Activated CD8-positive, alpha-beta T cell treated with anti-CD3 and anti-CD28 coated beads, Interleukin-2, amount 10 ng/mL, durations not matched to agents 7 days and 5 days (primary cell): ENCODE measurements at regions of chr2 and their contacts with region 1.

Region 1: DNA sequence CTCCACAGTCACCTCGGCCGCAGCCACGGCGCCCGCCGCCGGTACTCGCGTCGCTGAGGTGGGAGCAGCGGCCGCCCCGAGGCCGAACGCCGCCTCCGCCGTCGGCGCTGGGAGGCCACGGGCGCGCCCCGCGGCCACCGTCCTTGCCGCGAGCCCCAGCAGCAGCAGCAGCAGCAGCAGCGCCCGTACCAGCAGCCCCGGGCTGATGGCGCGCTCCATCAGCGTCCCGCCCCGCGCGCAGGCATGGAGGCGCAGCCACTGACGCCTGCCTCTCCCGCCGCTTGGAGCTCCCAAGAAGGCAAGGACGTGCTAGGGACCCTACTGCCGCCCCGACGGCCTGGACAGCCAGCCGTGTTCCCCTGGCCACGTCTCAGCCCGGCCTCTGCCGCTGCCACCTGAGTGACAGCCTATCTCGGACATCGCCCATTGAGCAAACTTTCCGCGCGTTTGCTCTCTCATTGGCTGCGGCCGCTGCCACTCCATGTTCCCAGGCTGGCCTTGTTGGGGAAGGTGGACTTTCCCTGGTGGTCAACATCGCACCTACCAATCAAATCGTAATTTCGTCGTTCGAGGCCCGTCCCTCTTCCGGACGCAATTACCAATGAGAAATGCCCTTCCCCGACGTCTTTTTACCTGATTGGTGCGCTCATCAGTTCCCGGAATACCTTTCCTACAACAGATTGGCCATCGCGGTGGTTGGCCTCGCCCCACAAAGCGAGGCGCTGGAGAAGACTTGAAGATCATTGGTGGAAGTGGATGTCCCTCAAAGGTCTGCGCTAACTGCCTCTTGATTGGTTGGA is at the start of gene EIF2AK3:
- DNase-seq: peak; percentile 98
- ATAC-seq: peak; percentile 90
- H3K4me3 Mint-ChIP-seq: peak within 1 kb of the TSS; percentile 94
- H3K27ac Mint-ChIP-seq: peak within 1 kb of the TSS; percentile 92
- H3K4me1 Mint-ChIP-seq: peaks cover 10% of the 10 kb centered on the region
- H3K27me3 Mint-ChIP-seq: no peaks in the 10 kb centered on the region
- total RNA-seq, gene EIF2AK3: 18.4 to 19.7 TPM

Region 2: DNA sequence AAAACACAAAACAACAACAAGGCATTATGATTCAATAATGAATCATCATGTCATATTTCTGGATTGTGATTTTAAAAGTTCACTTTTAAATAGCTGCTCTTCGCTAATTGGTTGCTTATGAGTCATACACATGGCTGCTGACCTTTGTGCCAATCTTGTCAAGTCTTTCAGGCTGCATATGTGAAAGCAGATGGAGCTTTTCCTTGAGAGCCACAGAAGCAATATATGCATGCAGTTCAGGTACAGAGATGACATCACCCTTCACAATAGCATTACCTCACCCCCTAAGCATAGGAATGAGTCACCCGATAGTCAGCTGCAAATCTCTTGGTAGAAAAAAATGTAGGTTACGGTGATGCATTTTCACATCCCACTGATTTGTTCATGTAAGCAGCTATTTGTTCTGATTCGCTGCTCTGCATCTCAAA is 27.2 kb before region 1 on chr2:
- CTCF ChIA-PET with region 1: no interaction called
- POLR2A ChIA-PET with region 1: interaction called, 19 read pairs
- DNase-seq: peak; percentile 60
- ATAC-seq: peak; percentile 100
- H3K4me3 Mint-ChIP-seq: no peak overlapping the region
- H3K27ac Mint-ChIP-seq: no peak overlapping the region
- H3K4me1 Mint-ChIP-seq: peaks cover 18% of the 10 kb centered on the region
- H3K27me3 Mint-ChIP-seq: no peaks in the 10 kb centered on the region

Region 3: DNA sequence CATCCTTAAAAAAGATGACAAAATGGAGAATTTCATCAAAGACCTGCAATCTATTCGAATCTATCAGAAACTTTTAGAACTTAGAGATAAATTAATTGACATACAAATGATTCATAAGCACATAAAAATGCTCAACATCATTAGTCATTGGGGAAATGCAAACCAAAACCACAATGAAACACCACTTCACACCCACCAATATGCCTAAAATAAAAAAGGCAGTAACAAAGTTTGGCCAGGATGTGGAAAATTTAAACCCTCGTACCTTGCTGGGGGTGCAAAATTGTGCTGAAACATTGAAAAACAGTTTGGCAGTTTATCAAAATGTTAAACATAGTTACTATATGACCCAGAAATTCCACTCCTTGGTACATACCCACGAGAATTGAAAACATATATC is 11.5 kb after region 1 on chr2:
- CTCF ChIA-PET with region 1: interaction called, 6 read pairs
- POLR2A ChIA-PET with region 1: interaction called, 19 read pairs
- DNase-seq: peak; percentile 62
- ATAC-seq: peak; percentile 62
- H3K4me3 Mint-ChIP-seq: peak overlapping the region; percentile 18
- H3K27ac Mint-ChIP-seq: peak overlapping the region; percentile 50
- H3K4me1 Mint-ChIP-seq: peaks cover 53% of the 10 kb centered on the region
- H3K27me3 Mint-ChIP-seq: peaks cover 7% of the 10 kb centered on the region

Region 4: GRCh38 chr2:88691339-88692183 is 64.3 kb after region 1 on chr2 and contains the start of gene RPIA:
- CTCF ChIA-PET with region 1: interaction called, 12 read pairs
- POLR2A ChIA-PET with region 1: interaction called, 8 read pairs
- DNase-seq: peak; percentile 99
- ATAC-seq: peak; percentile 95
- H3K4me3 Mint-ChIP-seq: peak within 1 kb of the TSS; percentile 93
- H3K27ac Mint-ChIP-seq: peak within 1 kb of the TSS; percentile 95
- H3K4me1 Mint-ChIP-seq: peaks cover 42% of the 10 kb centered on the region
- H3K27me3 Mint-ChIP-seq: no peaks in the 10 kb centered on the region
- total RNA-seq, gene RPIA: 47.8 to 51.8 TPM